PC-9 (cell line): ENCODE measurements at regions of chrX and their contacts with region 1.

Region 1: GRCh38 chrX:57104400-57104799 is 16.9 kb downstream of the SPIN2B start:
- DNase-seq: no peak
- H3K4me3 ChIP-seq: no peak overlapping the region
- H3K27ac ChIP-seq: no peak overlapping the region
- H3K4me1 ChIP-seq: no peaks in the 10 kb centered on the region
- H3K27me3 ChIP-seq: no peaks in the 10 kb centered on the region
- CTCF ChIP-seq: no peak

Region 2: GRCh38 chrX:56995271-56995994 is 109.0 kb before region 1 on chrX and contains the start of gene SPIN3:
- CTCF ChIA-PET with region 1: no interaction called
- POLR2A ChIA-PET with region 1: no interaction called
- intact Hi-C with region 1: loop called (anchors 10 kb)
- DNase-seq: peak; percentile 74 to 97
- H3K4me3 ChIP-seq: peak within 1 kb of the TSS; percentile 82
- H3K27ac ChIP-seq: peak within 1 kb of the TSS; percentile 70
- H3K4me1 ChIP-seq: no peaks in the 10 kb centered on the region; the same call in 1 of the 2 replicates
- H3K27me3 ChIP-seq: no peaks in the 10 kb centered on the region
- CTCF ChIP-seq: no peak
- total RNA-seq, gene SPIN3: 29.8 and 39.6 TPM in 2 replicates